ENCODE measurements at regions of chr2 and their contacts with region 1.

Region 1: DNA sequence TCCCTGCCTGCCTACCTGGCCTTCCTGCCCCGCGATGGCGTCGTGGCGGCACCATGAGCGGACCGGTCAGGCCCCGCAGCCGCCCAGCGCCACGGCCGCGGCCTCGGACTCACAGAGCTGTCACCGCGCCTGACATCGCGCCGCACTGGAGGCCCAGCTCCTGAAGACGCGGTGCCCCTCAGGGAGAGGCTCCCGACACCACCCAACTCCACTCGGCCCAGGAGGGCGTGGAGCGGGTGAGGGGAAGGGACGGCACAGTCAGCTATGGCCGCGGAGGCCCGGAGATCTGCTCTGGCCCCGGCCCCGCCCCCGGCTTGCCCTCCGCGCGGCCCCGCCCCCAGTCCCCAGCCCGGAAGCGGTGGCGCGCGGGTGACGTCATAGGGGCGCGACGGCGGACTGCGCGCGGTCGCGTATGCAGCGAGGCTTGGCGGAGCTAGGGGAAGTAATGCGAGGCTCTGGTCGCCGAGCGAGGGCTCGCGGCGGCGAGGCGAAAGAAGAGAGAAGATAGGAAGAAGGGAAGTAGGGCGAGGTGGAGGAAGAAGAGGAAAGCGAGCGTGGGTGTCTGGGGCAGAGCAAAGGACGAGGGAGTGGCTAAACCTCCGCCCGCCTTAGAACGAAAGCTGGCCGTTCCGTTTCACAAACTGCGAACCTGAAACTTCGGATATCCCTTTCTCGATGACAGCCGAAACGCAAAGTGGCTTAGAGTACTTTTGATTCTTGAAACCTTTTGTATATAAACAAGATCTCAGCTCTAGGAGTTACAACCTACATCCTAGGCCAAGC is at the start of gene SLC35F5:
- DNase-seq: peak; percentile 89
- H3K4me3 Mint-ChIP-seq: peak within 1 kb of the TSS; percentile 98
- H3K27ac Mint-ChIP-seq: peak within 1 kb of the TSS; percentile 99
- H3K4me1 Mint-ChIP-seq: peaks cover 17% of the 10 kb centered on the region
- H3K27me3 Mint-ChIP-seq: no peaks in the 10 kb centered on the region
- total RNA-seq, gene SLC35F5: 12.1 to 13.7 TPM

Region 2: GRCh38 chr2:113602869-113603466 is 153.6 kb before region 1 on chr2:
- CTCF ChIA-PET with region 1: interaction called, 6 read pairs
- intact Hi-C with region 1: loop called (anchors 5 kb)
- DNase-seq: no peak
- H3K4me3 Mint-ChIP-seq: peak overlapping the region; percentile 93
- H3K27ac Mint-ChIP-seq: peak overlapping the region; percentile 84
- H3K4me1 Mint-ChIP-seq: peaks cover 9% of the 10 kb centered on the region
- H3K27me3 Mint-ChIP-seq: no peaks in the 10 kb centered on the region

Region 3: GRCh38 chr2:113700186-113700841 is 56.2 kb before region 1 on chr2:
- CTCF ChIA-PET with region 1: no interaction called
- intact Hi-C with region 1: loop called (anchors 2 kb)
- DNase-seq: peak; percentile 71
- H3K4me3 Mint-ChIP-seq: peak overlapping the region; percentile 40
- H3K27ac Mint-ChIP-seq: peak overlapping the region; percentile 54
- H3K4me1 Mint-ChIP-seq: peaks cover 25% of the 10 kb centered on the region
- H3K27me3 Mint-ChIP-seq: no peaks in the 10 kb centered on the region

Region 4: DNA sequence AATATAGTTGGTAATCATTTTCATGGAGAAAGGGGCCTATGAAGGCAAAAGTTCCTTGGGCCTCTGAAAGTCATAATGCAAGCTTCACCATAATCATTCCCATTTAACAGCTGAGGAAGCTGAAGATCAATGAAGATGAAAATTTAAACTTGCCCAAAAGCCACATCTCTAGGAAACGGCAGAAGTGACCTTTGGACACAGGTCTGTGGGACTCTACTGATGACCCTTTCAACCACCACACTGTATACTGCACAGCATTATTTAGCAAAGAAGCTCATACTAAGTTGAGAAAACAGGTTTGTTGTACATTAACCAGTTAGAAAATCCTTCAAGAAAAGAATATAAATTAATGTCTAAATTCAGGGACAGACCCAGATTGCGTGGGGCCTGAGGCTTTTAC is 81.7 kb after region 1 on chr2:
- CTCF ChIA-PET with region 1: no interaction called
- intact Hi-C with region 1: no loop called
- DNase-seq: no peak
- H3K4me3 Mint-ChIP-seq: no peak overlapping the region
- H3K27ac Mint-ChIP-seq: no peak overlapping the region
- H3K4me1 Mint-ChIP-seq: peaks cover 4% of the 10 kb centered on the region
- H3K27me3 Mint-ChIP-seq: no peaks in the 10 kb centered on the region

Region 5: DNA sequence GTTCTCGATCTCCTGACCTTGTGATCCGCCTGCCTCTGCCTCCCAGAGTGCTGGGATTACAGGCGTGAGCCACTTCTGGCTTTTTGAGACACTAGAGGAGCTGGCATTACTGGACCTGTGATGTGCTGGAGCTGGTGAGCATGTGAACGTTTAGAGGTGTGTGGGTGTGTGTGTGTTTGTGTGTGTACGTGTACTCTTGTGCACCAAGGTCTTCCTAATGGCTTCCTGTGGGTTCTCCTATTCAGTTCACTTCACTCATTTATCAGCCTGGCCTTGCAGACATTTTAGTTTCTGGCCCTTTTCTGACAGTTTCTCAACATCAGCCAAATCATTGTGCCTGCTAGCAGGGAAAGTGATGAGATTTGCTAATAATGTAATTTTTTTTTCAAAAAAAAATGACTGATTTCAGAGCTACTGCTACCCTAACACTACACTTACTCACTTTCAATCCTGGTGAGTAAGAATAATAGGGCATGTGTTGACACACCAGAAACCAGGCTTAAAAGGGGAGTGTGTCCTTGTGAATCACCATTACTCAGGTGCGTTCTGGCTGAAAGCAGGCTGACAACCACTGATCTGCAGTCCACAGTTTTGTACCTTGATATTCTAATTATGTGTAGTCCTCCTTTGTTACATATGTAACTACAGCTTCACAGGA is 92.3 kb after region 1 on chr2:
- CTCF ChIA-PET with region 1: no interaction called
- intact Hi-C with region 1: loop called (anchors 1 kb)
- DNase-seq: peak; percentile 73
- H3K4me3 Mint-ChIP-seq: no peak overlapping the region
- H3K27ac Mint-ChIP-seq: peak overlapping the region; percentile 88
- H3K4me1 Mint-ChIP-seq: peaks cover 22% of the 10 kb centered on the region
- H3K27me3 Mint-ChIP-seq: no peaks in the 10 kb centered on the region

Region 6: DNA sequence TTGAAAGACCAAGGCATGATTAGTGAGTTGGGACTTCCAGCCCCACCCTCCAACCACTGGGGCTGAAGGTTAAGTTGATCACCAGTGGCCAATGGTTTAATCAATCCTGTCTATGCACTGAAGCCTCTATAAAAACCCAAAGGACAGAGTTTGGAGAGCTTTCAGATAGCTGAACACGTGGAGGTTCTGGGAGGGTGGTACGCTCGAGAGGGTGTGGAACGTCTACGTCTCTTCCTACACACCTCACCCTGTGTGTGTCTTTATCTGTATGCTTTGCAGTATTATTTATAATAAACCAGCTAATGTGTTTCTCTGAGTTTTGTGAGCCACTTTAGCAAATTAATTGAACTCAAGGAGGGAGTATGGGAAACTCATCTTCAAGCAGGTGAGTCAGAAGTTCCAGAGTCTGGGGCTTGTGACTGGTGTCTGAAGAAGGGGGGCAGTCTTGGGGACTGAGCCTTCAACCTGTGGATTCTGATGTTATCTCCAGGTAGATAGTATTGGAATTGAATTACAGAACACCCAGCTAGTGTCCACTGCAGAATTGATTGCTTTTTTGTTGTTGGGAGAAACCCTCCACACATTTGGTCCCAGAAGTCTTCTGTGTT is 153.7 kb after region 1 on chr2:
- CTCF ChIA-PET with region 1: no interaction called
- intact Hi-C with region 1: no loop called
- DNase-seq: peak; percentile 85
- H3K4me3 Mint-ChIP-seq: no peak overlapping the region
- H3K27ac Mint-ChIP-seq: peak overlapping the region; percentile 84
- H3K4me1 Mint-ChIP-seq: peaks cover 73% of the 10 kb centered on the region
- H3K27me3 Mint-ChIP-seq: no peaks in the 10 kb centered on the region

Region 7: DNA sequence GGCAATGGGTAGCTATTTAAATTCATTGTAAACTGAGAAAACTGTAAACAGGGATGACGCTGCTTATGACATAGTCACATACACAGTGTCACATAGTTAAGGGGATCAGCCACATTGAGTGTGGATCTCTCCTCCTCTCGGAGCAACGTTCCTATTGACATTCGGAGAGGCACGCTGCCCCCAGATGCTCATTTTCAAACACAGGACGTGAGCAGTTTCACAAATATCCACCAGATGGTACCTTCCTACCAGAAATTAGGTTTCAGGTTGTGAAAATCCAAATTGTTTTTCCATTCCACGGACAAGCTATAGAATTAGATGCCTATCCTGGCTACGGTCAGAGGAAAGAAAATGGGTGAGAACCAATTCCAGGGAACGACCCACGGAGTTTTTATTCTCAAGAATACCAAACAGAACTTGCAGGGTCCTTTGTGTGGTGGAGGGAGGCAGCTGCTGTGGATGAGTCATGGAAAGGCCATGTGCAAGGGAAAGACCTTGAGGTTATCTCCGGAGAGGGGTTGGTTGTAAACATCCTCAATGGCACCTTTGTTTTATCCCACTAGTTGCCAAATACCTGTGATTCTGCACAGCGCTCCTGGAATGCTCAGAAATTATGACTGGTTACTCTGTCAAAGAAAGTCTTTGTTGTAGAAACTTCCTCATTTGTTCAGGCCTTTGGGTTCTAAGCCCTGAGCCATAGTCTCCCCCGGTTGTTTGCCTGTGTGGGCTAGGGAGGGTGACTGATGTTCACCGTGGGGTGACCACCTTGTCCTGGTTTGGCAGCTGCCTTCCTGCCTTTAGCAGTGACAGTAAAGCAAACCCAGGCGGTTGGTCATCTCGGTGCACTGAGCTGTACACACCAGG is 221.3 kb after region 1 on chr2:
- CTCF ChIA-PET with region 1: interaction called, 4 read pairs
- intact Hi-C with region 1: loop called (anchors 1 kb)
- DNase-seq: no peak
- H3K4me3 Mint-ChIP-seq: no peak overlapping the region
- H3K27ac Mint-ChIP-seq: no peak overlapping the region
- H3K4me1 Mint-ChIP-seq: no peaks in the 10 kb centered on the region
- H3K27me3 Mint-ChIP-seq: no peaks in the 10 kb centered on the region

Measured in activated naive CD4-positive, alpha-beta T cell treated with anti-CD3 and anti-CD28 coated beads for 36 hours (primary cell).